MCF 10A (cell line): ENCODE measurements at regions of chr1 and their contacts with region 1.

Region 1: GRCh38 chr1:153608742-153609584 is 4.0 kb downstream of the S100A16 start:
- DNase-seq: peak; percentile 99
- H3K4me3 Mint-ChIP-seq: peak overlapping the region; percentile 90
- H3K27ac Mint-ChIP-seq: peak overlapping the region; percentile 94
- H3K4me1 Mint-ChIP-seq: peaks cover 45% of the 10 kb centered on the region
- H3K27me3 Mint-ChIP-seq: no peaks in the 10 kb centered on the region
- CTCF ChIP-seq: no peak

Region 2: DNA sequence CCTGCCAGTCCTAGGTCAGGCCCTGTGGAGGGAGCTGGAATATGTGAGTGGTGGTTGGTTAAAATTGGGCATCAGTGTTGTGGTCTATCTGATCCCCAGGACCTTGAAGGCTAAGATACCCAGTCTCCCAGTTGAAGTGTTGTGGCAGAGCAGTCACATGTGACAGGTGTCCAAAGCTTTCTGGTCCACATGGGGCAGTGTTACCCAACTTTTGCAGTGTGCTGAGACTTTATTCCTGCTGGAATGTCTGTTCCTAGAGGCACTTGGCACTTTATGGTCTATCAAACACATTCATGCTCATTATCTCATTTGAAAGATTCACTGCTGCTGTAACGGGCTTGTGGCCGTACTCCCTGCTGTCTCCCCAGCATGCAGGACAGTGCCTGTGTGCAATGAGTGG is 370.4 kb before region 1 on chr1:
- CTCF ChIA-PET with region 1: no interaction called
- POLR2A ChIA-PET with region 1: no interaction called
- intact Hi-C with region 1: no loop called
- DNase-seq: peak; percentile 47
- H3K4me3 Mint-ChIP-seq: no peak overlapping the region
- H3K27ac Mint-ChIP-seq: no peak overlapping the region
- H3K4me1 Mint-ChIP-seq: no peaks in the 10 kb centered on the region
- H3K27me3 Mint-ChIP-seq: peaks cover 62% of the 10 kb centered on the region
- CTCF ChIP-seq: peak; percentile 25

Region 3: GRCh38 chr1:153532769-153533599 is 76.0 kb before region 1 on chr1:
- CTCF ChIA-PET with region 1: interaction called, 37 read pairs
- POLR2A ChIA-PET with region 1: interaction called, 153 read pairs
- intact Hi-C with region 1: loop called (anchors 1 kb)
- DNase-seq: peak; percentile 97
- H3K4me3 Mint-ChIP-seq: peak overlapping the region; percentile 99
- H3K27ac Mint-ChIP-seq: peak overlapping the region; percentile 75
- H3K4me1 Mint-ChIP-seq: peaks cover 47% of the 10 kb centered on the region
- H3K27me3 Mint-ChIP-seq: no peaks in the 10 kb centered on the region
- CTCF ChIP-seq: peak; percentile 93

Region 4: GRCh38 chr1:153566440-153567379 is 42.3 kb before region 1 on chr1:
- CTCF ChIA-PET with region 1: interaction called, 214 read pairs
- POLR2A ChIA-PET with region 1: interaction called, 280 read pairs
- intact Hi-C with region 1: no loop called
- DNase-seq: peak; percentile 100
- H3K4me3 Mint-ChIP-seq: peak overlapping the region; percentile 67
- H3K27ac Mint-ChIP-seq: peak overlapping the region; percentile 92
- H3K4me1 Mint-ChIP-seq: peaks cover 64% of the 10 kb centered on the region
- H3K27me3 Mint-ChIP-seq: no peaks in the 10 kb centered on the region
- CTCF ChIP-seq: no peak

Region 5: DNA sequence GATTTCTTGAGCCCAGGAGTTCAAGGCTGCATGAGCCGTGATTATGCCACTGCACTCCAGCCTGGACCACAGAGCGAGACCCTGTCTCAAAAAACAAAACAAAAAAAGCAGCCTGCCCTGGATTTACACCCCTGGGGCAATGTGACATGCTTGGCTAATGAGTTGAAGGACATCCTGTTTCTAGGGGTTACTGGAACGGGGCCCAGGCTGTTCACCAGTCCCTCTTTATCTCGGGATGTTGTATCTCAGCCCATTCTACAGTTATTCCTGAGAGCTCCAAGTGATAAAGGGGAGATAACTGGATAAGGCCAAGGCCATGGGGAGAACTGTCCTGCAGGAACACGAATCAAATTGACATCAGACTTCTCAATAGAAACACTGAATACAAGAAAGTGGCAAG is 21.6 kb before region 1 on chr1:
- CTCF ChIA-PET with region 1: interaction called, 6 read pairs
- POLR2A ChIA-PET with region 1: interaction called, 20 read pairs
- intact Hi-C with region 1: no loop called
- DNase-seq: no peak
- H3K4me3 Mint-ChIP-seq: no peak overlapping the region
- H3K27ac Mint-ChIP-seq: no peak overlapping the region
- H3K4me1 Mint-ChIP-seq: peaks cover 16% of the 10 kb centered on the region
- H3K27me3 Mint-ChIP-seq: no peaks in the 10 kb centered on the region
- CTCF ChIP-seq: no peak

Region 6: GRCh38 chr1:153742411-153743142 is 133.6 kb after region 1 on chr1:
- CTCF ChIA-PET with region 1: no interaction called
- POLR2A ChIA-PET with region 1: no interaction called
- intact Hi-C with region 1: no loop called
- DNase-seq: no peak
- H3K4me3 Mint-ChIP-seq: no peak overlapping the region
- H3K27ac Mint-ChIP-seq: peak overlapping the region; percentile 4
- H3K4me1 Mint-ChIP-seq: peaks cover 22% of the 10 kb centered on the region
- H3K27me3 Mint-ChIP-seq: no peaks in the 10 kb centered on the region
- CTCF ChIP-seq: no peak

Region 7: DNA sequence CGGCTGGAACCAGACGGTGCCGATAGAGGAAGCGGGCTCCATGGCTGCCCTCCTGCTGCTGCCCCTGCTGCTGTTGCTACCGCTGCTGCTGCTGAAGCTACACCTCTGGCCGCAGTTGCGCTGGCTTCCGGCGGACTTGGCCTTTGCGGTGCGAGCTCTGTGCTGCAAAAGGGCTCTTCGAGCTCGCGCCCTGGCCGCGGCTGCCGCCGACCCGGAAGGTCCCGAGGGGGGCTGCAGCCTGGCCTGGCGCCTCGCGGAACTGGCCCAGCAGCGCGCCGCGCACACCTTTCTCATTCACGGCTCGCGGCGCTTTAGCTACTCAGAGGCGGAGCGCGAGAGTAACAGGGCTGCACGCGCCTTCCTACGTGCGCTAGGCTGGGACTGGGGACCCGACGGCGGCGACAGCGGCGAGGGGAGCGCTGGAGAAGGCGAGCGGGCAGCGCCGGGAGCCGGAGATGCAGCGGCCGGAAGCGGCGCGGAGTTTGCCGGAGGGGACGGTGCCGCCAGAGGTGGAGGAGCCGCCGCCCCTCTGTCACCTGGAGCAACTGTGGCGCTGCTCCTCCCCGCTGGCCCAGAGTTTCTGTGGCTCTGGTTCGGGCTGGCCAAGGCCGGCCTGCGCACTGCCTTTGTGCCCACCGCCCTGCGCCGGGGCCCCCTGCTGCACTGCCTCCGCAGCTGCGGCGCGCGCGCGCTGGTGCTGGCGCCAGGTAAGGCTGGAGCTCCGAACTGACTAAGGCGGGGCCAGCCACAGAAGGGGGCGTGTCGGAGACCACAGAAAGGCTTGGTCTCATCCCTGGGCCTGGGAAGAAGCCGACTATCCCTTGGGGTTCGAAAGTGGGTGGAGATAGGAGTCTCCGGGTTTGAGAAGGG is 166.7 kb after region 1 on chr1:
- CTCF ChIA-PET with region 1: no interaction called
- POLR2A ChIA-PET with region 1: interaction called, 10 read pairs
- intact Hi-C with region 1: no loop called
- DNase-seq: peak; percentile 81
- H3K4me3 Mint-ChIP-seq: peak overlapping the region; percentile 70
- H3K27ac Mint-ChIP-seq: peak overlapping the region; percentile 68
- H3K4me1 Mint-ChIP-seq: peaks cover 36% of the 10 kb centered on the region
- H3K27me3 Mint-ChIP-seq: no peaks in the 10 kb centered on the region
- CTCF ChIP-seq: no peak

Region 8: GRCh38 chr1:153842006-153842471 is 233.1 kb after region 1 on chr1:
- CTCF ChIA-PET with region 1: no interaction called
- POLR2A ChIA-PET with region 1: no interaction called
- intact Hi-C with region 1: no loop called
- DNase-seq: peak; percentile 18
- H3K4me3 Mint-ChIP-seq: no peak overlapping the region
- H3K27ac Mint-ChIP-seq: peak overlapping the region; percentile 44
- H3K4me1 Mint-ChIP-seq: peaks cover 11% of the 10 kb centered on the region
- H3K27me3 Mint-ChIP-seq: no peaks in the 10 kb centered on the region
- CTCF ChIP-seq: no peak

Region 9: DNA sequence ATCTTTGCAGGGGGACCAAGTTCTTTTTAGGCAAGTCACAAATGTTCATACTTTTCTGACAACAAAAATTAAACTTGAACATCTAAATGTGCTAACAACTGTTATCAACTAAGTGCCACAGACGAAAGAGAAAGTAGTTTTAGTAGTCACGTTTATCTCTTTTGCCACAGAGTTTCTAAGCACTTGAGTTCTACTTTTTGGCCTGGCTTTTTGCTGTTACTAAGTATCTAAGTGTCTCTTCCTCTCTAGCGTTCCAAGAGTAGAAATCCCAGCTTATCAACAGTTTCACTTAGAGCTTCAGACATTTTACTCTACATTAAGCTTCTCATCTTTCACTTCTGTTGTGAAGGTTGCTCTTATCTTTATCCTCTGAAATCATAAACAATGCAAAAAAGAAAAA is 279.6 kb after region 1 on chr1:
- CTCF ChIA-PET with region 1: no interaction called
- POLR2A ChIA-PET with region 1: no interaction called
- intact Hi-C with region 1: no loop called
- DNase-seq: no peak
- H3K4me3 Mint-ChIP-seq: no peak overlapping the region
- H3K27ac Mint-ChIP-seq: no peak overlapping the region
- H3K4me1 Mint-ChIP-seq: peaks cover 8% of the 10 kb centered on the region
- H3K27me3 Mint-ChIP-seq: no peaks in the 10 kb centered on the region
- CTCF ChIP-seq: no peak

Region 10: GRCh38 chr1:153977250-153978240 is 368.6 kb after region 1 on chr1 and contains the start of gene JTB:
- CTCF ChIA-PET with region 1: no interaction called
- POLR2A ChIA-PET with region 1: interaction called, 12 read pairs
- intact Hi-C with region 1: no loop called
- DNase-seq: peak; percentile 93
- H3K4me3 Mint-ChIP-seq: peak within 1 kb of the TSS; percentile 98
- H3K27ac Mint-ChIP-seq: peak within 1 kb of the TSS; percentile 96
- H3K4me1 Mint-ChIP-seq: peaks cover 23% of the 10 kb centered on the region
- H3K27me3 Mint-ChIP-seq: no peaks in the 10 kb centered on the region
- CTCF ChIP-seq: no peak
- total RNA-seq, gene JTB: 194 and 224 TPM in 2 replicates